ENCODE measurements at regions of chr1 and their contacts with region 1.

Region 1: DNA sequence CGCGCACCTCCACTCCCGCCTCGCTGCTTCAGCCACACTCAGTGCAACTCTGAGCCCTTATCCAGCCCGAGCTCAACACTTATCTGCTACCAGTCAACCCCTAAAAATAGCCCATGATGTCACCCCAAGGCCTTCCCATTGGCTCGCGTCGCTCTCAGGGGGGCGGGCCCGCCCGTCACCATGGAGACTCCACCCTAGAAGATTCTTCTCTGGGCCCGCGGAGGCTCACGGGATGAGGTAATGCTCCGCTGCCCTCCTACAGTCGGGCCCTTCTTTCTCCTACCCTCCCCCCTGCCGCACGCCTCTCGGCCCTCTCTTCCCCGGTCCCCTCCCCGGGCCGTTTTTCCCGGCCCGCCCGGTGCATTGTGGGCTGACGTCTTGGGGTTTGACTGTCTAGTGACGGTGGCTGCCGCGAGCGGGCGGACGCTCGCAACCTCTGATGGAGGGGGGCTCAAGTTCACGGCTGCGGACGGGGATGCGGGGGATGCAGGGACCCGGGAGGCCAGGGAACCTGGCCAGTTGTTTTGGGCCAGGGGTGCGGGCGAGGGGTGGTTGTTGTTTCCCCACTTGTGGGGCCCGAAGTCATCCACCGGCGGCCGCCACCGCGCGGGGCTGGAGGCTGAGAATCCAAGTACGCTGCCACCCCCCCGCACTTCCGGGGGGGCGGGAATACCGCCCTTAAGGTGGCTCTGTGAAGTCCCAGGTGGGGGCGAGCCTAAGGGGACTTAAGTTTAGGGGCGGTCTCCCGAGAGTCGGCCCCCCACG is at the start of gene JUN:
- DNase-seq: peak; percentile 99
- ATAC-seq: peak; percentile 74
- H3K4me3 Mint-ChIP-seq: peak within 1 kb of the TSS; percentile 87
- H3K27ac Mint-ChIP-seq: peak within 1 kb of the TSS; percentile 95
- H3K4me1 Mint-ChIP-seq: peaks cover 30% of the 10 kb centered on the region
- H3K27me3 Mint-ChIP-seq: no peaks in the 10 kb centered on the region
- total RNA-seq, gene JUN: 107 to 110 TPM

Region 2: GRCh38 chr1:58755468-58755872 is 28.7 kb before region 1 on chr1:
- CTCF ChIA-PET with region 1: interaction called, 4 read pairs
- POLR2A ChIA-PET with region 1: interaction called, 26 read pairs
- DNase-seq: peak; percentile 71
- ATAC-seq: peak; percentile 75
- H3K4me3 Mint-ChIP-seq: peak overlapping the region; percentile 45
- H3K27ac Mint-ChIP-seq: peak overlapping the region; percentile 90
- H3K4me1 Mint-ChIP-seq: peaks cover 50% of the 10 kb centered on the region
- H3K27me3 Mint-ChIP-seq: no peaks in the 10 kb centered on the region

Region 3: DNA sequence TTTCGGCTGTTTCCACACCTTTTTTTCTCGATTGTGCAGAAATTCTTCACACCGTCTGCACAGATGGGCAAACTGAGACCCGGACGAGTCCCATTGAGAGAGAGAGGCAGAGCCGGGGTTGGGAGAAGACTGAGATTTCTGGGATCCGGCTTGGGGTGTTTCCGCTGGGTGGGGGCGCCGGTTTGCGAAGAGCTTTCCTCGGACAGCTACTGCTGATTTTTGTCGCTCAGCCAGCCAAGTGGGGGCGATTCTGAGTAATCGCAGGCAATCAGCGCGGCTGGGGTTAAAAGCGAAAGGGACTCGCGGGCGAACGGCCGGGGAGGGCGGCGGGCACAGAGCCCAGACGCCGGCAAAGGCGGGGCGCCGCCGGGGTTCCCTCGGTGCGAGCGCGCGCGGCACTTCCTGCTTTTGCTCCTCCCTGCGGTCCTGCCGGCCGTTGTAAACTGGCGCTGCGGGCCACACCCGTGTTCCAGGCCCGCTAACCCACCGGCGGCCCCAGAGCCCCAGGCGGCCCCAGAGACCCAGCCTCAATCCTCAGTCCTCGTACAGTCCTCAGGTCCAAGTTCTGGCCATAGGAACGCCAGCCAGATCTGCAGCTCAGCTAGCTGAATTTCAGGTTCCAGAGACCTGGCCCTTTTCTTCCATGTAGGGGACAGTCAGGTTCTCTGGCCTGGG is 32.0 kb after region 1 on chr1:
- CTCF ChIA-PET with region 1: no interaction called
- POLR2A ChIA-PET with region 1: interaction called, 18 read pairs
- DNase-seq: peak; percentile 92
- ATAC-seq: peak; percentile 93
- H3K4me3 Mint-ChIP-seq: peak overlapping the region; percentile 83
- H3K27ac Mint-ChIP-seq: peak overlapping the region; percentile 92
- H3K4me1 Mint-ChIP-seq: peaks cover 49% of the 10 kb centered on the region
- H3K27me3 Mint-ChIP-seq: peaks cover 7% of the 10 kb centered on the region

Region 4: DNA sequence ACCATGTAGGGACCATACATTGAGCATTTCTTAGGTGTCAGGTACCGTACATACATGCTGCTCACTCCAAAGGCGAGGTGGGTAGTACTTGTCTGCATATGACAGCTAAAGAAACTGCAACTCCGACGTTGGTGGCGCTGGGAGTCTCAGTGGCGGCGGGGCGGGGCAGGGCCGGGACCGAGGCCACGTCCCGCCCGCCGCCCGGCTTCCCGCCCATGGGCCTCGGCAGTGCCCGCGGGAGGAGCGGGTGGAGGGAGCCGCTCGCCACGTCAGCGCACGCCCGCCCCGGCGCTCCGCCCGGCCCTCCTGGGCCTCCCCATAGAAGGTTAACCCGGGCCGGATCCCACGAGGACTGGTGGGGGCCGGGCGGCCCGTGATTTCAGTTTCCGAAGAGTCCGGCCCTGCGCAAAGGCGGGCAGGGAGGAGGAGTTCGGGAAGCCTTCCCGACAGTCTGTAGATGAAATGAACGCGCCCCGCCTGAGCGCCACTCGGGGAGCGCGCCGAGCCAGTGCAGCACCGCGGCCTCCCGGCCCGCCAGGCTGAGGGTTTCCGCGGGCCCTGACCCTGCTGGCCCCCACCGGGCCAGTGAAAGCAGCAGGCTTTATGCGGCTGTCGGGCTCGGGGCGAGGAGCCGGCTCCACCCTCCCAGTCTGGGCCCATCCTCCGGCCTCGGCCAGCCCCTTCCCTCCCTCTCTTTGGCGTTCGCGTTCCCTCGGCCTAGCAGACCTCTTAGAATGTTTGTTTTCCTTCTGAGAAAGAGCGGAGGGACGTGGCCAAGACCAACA is 119.5 kb after region 1 on chr1:
- CTCF ChIA-PET with region 1: interaction called, 5 read pairs
- POLR2A ChIA-PET with region 1: interaction called, 14 read pairs
- DNase-seq: peak; percentile 86
- ATAC-seq: peak; percentile 95
- H3K4me3 Mint-ChIP-seq: peak overlapping the region; percentile 75
- H3K27ac Mint-ChIP-seq: peak overlapping the region; percentile 88
- H3K4me1 Mint-ChIP-seq: peaks cover 20% of the 10 kb centered on the region
- H3K27me3 Mint-ChIP-seq: peaks cover 3% of the 10 kb centered on the region

Region 5: DNA sequence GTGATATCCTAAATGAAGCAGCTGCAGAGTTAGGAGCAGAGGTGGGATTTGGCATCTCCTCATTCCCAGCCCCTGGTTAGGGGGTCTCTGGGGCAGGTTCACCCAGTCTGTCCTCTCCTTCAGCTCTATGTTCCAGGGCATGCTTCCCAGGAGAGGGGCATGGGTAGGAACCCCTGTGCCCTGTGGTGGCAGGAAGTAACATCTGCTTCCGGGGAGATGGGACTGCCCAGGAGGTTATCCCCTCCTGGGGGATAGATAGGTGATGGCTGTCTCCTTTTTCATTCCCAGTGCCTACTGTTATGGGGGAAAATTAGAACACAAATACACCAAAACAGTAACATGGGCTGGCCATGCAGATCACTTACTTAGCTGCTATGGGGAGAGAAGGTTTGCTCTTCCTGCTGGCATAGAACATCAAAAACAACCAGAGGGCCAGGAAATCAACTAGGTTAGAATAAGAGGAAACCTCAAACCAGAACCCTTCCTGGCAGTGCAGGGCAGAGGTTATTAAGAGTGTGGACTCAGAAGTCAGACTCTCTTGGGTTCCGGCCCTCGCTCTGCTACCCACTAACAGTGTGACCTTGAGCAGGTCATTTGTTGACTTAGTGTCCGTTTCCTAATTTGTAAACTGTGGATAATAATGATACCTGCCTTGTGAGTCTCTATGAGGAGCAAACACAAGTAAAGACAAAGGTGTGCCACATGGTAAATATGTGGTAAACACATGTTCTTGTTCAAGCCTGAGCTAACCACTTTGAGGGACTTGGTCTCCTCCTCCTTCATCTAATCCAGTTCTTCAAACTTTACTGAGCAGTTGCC is 157.5 kb after region 1 on chr1:
- CTCF ChIA-PET with region 1: interaction called, 7 read pairs
- POLR2A ChIA-PET with region 1: interaction called, 11 read pairs
- DNase-seq: peak; percentile 73
- ATAC-seq: peak; percentile 87
- H3K4me3 Mint-ChIP-seq: peak overlapping the region; percentile 65
- H3K27ac Mint-ChIP-seq: peak overlapping the region; percentile 85
- H3K4me1 Mint-ChIP-seq: peaks cover 71% of the 10 kb centered on the region
- H3K27me3 Mint-ChIP-seq: no peaks in the 10 kb centered on the region

Region 6: GRCh38 chr1:59046730-59047157 is 262.6 kb after region 1 on chr1:
- CTCF ChIA-PET with region 1: interaction called, 10 read pairs
- POLR2A ChIA-PET with region 1: interaction called, 38 read pairs
- DNase-seq: peak; percentile 75
- ATAC-seq: peak; percentile 90
- H3K4me3 Mint-ChIP-seq: peak overlapping the region; percentile 49
- H3K27ac Mint-ChIP-seq: peak overlapping the region; percentile 86
- H3K4me1 Mint-ChIP-seq: peaks cover 49% of the 10 kb centered on the region
- H3K27me3 Mint-ChIP-seq: no peaks in the 10 kb centered on the region

Region 7: DNA sequence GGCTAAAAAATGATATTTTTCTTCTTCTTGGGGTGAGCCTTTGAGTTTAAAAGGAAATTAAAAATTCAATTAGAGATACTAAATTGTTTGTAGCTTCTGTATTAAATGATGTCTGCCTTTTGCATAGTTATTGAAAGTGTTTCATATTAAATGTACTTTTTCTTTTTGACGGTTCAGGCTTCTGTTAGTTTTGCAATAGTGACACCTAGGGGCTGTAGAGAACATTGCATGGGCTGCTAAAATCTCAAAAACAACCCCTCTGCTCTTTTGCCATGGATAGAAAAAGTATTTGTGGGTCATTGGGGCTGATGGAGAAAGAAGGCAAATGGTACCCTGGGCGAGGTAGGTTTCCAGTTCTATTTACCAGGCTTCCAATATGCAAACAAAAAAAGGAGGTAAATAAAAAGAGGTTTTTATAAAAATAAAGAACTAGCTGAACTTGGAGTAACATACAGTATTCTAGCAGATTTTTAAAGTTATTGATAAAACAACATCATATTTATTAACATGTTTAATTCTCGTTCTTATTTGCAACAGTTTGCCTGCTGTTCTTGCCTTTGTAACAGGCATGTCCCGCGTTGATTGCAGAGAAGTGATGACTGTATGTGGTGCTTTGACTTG is 915.2 kb after region 1 on chr1:
- CTCF ChIA-PET with region 1: interaction called, 63 read pairs
- POLR2A ChIA-PET with region 1: interaction called, 12 read pairs
- DNase-seq: peak; percentile 37
- ATAC-seq: peak; percentile 34
- H3K4me3 Mint-ChIP-seq: no peak overlapping the region
- H3K27ac Mint-ChIP-seq: no peak overlapping the region
- H3K4me1 Mint-ChIP-seq: peaks cover 31% of the 10 kb centered on the region
- H3K27me3 Mint-ChIP-seq: no peaks in the 10 kb centered on the region